Activated CD8-positive, alpha-beta memory T cell treated with anti-CD3 and anti-CD28 coated beads, Interleukin-2, amount 10 ng/mL, durations not matched to agents 7 days and 5 days (primary cell): ENCODE measurements at regions of chr7 and their contacts with region 1.

Region 1: DNA sequence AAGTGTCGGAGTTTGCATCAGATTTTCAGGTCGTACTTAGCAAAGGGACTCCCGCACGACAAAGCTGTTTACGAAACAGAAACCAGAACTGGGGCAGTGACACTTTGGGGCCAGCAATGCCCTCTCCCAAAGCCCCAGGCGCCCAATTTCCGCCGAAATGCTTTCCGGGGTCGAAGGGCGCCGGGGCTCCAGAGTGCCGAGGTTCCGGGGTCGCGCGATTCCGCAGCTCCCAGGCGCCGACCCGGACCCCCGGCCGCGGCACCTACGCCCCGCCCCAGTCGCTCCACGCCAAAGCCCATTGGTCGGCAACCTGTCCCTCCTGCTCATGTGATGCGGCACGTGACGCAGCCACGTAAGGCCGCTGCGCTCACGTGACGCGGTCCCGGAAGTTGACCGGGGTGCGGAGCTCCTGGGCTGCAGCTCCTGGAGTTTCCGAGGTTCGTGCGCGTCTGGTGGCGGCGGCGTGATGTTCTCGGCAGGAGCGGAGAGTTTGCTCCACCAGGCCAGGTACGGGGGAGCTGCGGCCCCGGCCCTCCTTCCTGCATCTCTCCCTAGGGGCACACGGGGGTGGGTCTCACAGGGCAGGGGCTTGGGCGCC is at the start of gene AP5Z1:
- DNase-seq: peak; percentile 97
- ATAC-seq: peak; percentile 93
- H3K4me3 Mint-ChIP-seq: peak within 1 kb of the TSS; percentile 98
- H3K27ac Mint-ChIP-seq: peak within 1 kb of the TSS; percentile 92
- H3K4me1 Mint-ChIP-seq: peaks cover 36% of the 10 kb centered on the region
- H3K27me3 Mint-ChIP-seq: no peaks in the 10 kb centered on the region
- total RNA-seq, gene AP5Z1: 51.2 to 57.5 TPM

Region 2: DNA sequence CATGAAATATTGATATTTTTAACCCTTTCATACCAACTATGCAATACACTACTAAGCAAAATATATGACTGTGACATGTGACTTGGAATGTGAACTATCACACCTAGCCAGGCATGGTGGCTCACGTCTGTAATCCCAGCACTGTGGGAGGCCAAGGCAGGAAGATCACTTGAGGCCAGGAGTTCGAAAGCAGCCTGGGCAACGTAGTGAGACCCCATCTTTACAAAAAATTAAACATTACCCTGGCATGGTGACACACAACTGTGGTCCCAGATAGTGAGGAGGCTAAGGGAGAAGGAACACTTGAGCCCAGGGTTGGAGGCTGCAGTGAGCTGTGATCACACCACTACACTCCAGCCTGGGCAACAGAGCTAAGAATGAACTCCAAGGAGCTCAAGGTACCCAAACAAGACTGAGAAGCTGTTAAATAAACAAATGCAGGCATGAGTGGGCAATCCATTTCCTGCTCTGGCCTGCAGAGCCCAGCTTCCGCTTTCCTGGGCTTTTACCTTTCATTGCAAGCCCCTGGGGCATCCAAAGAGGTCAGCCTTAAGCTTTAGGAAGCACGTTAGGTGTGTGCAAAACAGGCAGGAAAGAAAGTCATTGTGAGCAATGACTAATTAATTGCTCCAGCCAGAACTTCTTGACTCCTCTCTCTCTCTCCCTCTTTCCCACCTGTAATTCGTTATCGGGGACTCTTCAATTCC is 255.4 kb before region 1 on chr7:
- CTCF ChIA-PET with region 1: no interaction called
- DNase-seq: no peak
- ATAC-seq: no peak
- H3K4me3 Mint-ChIP-seq: no peak overlapping the region
- H3K27ac Mint-ChIP-seq: no peak overlapping the region
- H3K4me1 Mint-ChIP-seq: no peaks in the 10 kb centered on the region
- H3K27me3 Mint-ChIP-seq: peaks cover 3% of the 10 kb centered on the region

Region 3: GRCh38 chr7:4641667-4642467 is 133.5 kb before region 1 on chr7:
- CTCF ChIA-PET with region 1: interaction called, 10 read pairs
- DNase-seq: peak; percentile 96
- ATAC-seq: peak; percentile 89
- H3K4me3 Mint-ChIP-seq: peak overlapping the region; percentile 87
- H3K27ac Mint-ChIP-seq: peak overlapping the region; percentile 93
- H3K4me1 Mint-ChIP-seq: peaks cover 20% of the 10 kb centered on the region
- H3K27me3 Mint-ChIP-seq: no peaks in the 10 kb centered on the region

Region 4: GRCh38 chr7:4744391-4745264 is 30.7 kb before region 1 on chr7:
- CTCF ChIA-PET with region 1: interaction called, 12 read pairs
- DNase-seq: peak; percentile 86
- ATAC-seq: peak; percentile 81
- H3K4me3 Mint-ChIP-seq: peak overlapping the region; percentile 70
- H3K27ac Mint-ChIP-seq: peak overlapping the region; percentile 90
- H3K4me1 Mint-ChIP-seq: peaks cover 37% of the 10 kb centered on the region
- H3K27me3 Mint-ChIP-seq: no peaks in the 10 kb centered on the region

Region 5: DNA sequence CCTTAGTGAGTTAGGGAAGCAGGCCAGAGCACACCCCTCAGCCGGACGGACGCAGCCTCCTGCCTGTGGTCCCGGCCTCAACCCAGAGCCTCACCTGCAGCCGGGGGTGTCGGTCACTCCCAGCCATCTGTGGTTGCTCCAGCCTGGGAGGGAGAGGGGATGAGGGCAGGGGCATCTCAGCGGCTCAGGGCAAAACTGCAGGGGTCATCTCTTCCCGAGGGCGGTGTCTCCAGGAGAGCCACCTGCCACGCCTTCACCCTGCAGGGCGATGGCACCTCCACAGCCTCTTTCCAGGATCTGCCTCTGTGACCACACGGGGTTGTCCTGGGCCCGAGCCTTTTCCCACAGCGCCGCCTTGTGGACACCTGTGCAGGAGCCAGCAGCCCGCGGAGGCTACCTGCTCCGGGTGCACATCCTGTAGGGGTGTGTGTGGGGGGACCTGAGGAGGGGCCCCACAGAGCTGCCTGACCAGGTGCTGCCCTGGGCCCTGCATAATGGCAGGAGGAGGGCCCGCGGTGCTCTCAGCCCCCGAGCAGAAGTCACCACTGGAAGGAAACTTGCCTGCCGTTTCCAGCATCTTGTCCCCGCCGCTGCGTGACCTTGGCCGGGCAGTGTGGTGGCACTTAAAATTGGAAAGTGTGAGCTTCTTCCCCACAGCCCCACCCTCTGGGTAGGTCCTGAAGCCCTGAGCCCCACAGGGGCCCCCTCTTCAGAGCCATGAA is 21.5 kb before region 1 on chr7:
- CTCF ChIA-PET with region 1: interaction called, 14 read pairs
- DNase-seq: peak; percentile 87
- ATAC-seq: peak; percentile 96
- H3K4me3 Mint-ChIP-seq: no peak overlapping the region
- H3K27ac Mint-ChIP-seq: no peak overlapping the region
- H3K4me1 Mint-ChIP-seq: peaks cover 14% of the 10 kb centered on the region
- H3K27me3 Mint-ChIP-seq: no peaks in the 10 kb centered on the region

Region 6: DNA sequence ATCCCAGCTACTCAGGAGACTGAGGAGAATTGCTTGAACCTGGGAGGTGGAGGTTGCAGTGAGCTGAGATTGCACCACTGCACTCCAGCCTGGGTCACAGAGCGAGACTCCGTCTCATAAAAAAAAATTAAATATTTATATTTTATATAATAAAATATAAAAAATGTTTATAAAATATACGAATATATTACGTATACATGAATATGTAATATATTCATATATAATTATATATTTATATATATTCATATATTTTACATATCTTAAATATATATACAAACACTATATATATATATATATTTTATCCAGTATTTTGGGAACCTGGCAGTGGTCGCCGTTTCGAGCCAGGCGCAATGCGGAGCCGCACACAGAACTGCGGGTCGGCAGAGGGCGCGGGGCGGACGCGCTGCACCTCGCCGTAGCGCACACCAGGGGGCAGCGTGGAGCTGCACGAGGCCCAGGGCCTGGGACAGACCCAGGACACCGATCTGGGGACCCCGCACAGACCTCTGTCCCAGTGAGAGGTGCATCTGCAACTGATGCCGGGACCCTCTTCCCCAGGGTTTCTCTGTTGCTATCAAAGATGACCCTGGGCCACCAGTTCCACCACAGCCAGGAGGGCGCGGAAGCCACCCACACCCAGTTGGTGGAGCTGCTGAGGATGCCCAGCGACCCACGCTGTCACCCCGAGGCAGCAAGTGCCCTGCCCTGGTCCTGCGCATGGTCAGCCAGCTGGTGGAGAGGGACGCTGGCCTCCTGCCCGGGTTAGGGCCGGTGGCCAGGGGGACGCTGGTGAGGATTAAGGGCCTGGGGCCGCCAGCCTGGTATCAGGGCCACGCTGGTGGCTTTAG is 22.7 kb after region 1 on chr7:
- CTCF ChIA-PET with region 1: interaction called, 14 read pairs
- DNase-seq: peak; percentile 65
- ATAC-seq: peak; percentile 89
- H3K4me3 Mint-ChIP-seq: no peak overlapping the region
- H3K27ac Mint-ChIP-seq: no peak overlapping the region
- H3K4me1 Mint-ChIP-seq: peaks cover 2% of the 10 kb centered on the region
- H3K27me3 Mint-ChIP-seq: no peaks in the 10 kb centered on the region

Region 7: DNA sequence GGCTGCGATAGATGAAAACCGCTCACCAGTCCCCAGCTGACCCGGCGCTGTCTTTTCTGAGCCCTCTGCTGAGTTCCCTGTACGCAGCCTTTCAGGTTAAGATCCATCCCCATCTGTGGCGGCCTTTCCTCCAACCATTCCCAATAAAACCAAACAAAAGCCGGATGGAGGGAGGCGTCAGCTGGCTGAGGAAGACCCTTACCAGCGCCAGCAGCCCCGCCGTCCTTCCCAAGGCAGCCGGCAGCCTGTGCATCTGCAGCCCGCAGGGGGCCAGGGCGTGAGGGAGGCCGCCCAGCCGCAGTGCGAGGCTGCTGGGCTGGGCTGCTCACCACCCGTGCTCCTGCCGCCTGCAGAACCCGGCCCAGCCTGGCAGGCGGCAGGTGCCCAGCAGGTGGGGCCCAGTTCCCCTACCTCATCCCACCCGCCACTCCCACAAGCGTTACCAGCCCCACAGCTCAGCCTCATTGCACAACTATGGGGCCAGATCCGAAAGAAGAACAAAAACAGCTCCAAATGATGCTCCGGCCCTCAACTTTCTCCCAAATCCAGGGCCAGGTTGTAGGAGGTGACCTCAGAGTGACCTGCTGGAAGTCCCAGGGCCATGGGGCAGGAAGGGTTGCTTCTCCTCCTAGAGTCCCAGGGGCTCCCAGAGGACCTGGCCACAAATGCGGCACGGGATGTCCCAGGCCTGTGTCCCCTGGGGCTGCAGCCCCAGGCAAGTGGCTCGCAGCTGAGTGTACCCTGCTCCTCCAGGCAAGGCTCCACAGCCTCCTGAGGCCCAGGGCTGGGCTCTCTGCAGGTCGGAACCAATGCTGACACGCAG is 62.7 kb after region 1 on chr7:
- CTCF ChIA-PET with region 1: no interaction called
- DNase-seq: no peak
- ATAC-seq: no peak
- H3K4me3 Mint-ChIP-seq: no peak overlapping the region
- H3K27ac Mint-ChIP-seq: no peak overlapping the region
- H3K4me1 Mint-ChIP-seq: no peaks in the 10 kb centered on the region
- H3K27me3 Mint-ChIP-seq: no peaks in the 10 kb centered on the region